Heart right ventricle (tissue), 16 donors: ENCODE measurements at regions of chr3 and their contacts with region 1.

Region 1: GRCh38 chr3:180912304-180913296 is at the start of gene FXR1:
- DNase-seq: peak; percentile 89
- ATAC-seq: peak; percentile 97 to 99 (median 99)
- H3K4me3 ChIP-seq: peak within 1 kb of the TSS; percentile 54 to 100 (median 90)
- H3K27ac ChIP-seq: peak within 1 kb of the TSS; percentile 83 to 97 (median 91)
- H3K4me1 ChIP-seq: peaks cover 0 to 40% (median 34%) of the 10 kb centered on the region in 9 donors
- H3K27me3 ChIP-seq: no peaks in the 10 kb centered on the region
- CTCF ChIP-seq: peak; percentile 60 to 93 (median 82)
- total RNA-seq, gene FXR1: 196 to 314 (median 274) TPM

Region 2: GRCh38 chr3:180802837-180803236 is 109.8 kb before region 1 on chr3:
- intact Hi-C with region 1: loop called in 1 of 10 experiments (anchors 2 kb)
- DNase-seq: no peak
- ATAC-seq: no peak
- H3K4me3 ChIP-seq: no peak overlapping the region
- H3K27ac ChIP-seq: no peak overlapping the region
- H3K4me1 ChIP-seq: peaks cover 0 to 13% (median 0%) of the 10 kb centered on the region in 9 donors
- H3K27me3 ChIP-seq: no peaks in the 10 kb centered on the region
- CTCF ChIP-seq: peak in 7 of 9 donors; percentile 49 to 71 (median 63)

Region 3: GRCh38 chr3:180870008-180870699 is 42.4 kb before region 1 on chr3:
- intact Hi-C with region 1: loop called in 1 of 10 experiments (anchors 5 kb)
- DNase-seq: peak; percentile 11 to 40
- ATAC-seq: peak in 7 of 8 donors; percentile 57 to 75 (median 69)
- H3K4me3 ChIP-seq: peak overlapping the region; percentile 15 to 57 (median 48)
- H3K27ac ChIP-seq: peak overlapping the region in 6 of 10 donors; percentile 6 to 64 (median 48)
- H3K4me1 ChIP-seq: peaks cover 0 to 27% (median 16%) of the 10 kb centered on the region in 9 donors
- H3K27me3 ChIP-seq: peaks cover 0 to 8% (median 0%) of the 10 kb centered on the region in 7 donors
- CTCF ChIP-seq: peak in 1 of 9 donors; percentile 13

Region 4: GRCh38 chr3:180947761-180948633 is 35.4 kb after region 1 on chr3:
- intact Hi-C with region 1: loop called in 1 of 10 experiments (anchors 2 kb)
- DNase-seq: no peak
- ATAC-seq: no peak
- H3K4me3 ChIP-seq: no peak overlapping the region
- H3K27ac ChIP-seq: no peak overlapping the region
- H3K4me1 ChIP-seq: no peaks in the 10 kb centered on the region
- H3K27me3 ChIP-seq: no peaks in the 10 kb centered on the region
- CTCF ChIP-seq: no peak

Region 5: GRCh38 chr3:180959691-180960090 is 47.1 kb after region 1 on chr3:
- intact Hi-C with region 1: no loop called
- DNase-seq: no peak
- ATAC-seq: no peak
- H3K4me3 ChIP-seq: no peak overlapping the region
- H3K27ac ChIP-seq: no peak overlapping the region
- H3K4me1 ChIP-seq: peaks cover 0 to 7% (median 0%) of the 10 kb centered on the region in 9 donors
- H3K27me3 ChIP-seq: no peaks in the 10 kb centered on the region
- CTCF ChIP-seq: no peak

Region 6: GRCh38 chr3:180973543-180973942 is 60.9 kb after region 1 on chr3:
- intact Hi-C with region 1: loop called in 1 of 10 experiments (anchors 5 kb)
- DNase-seq: no peak
- ATAC-seq: no peak
- H3K4me3 ChIP-seq: no peak overlapping the region
- H3K27ac ChIP-seq: no peak overlapping the region
- H3K4me1 ChIP-seq: peaks cover 0 to 14% (median 0%) of the 10 kb centered on the region in 9 donors
- H3K27me3 ChIP-seq: no peaks in the 10 kb centered on the region
- CTCF ChIP-seq: no peak

Region 7: DNA sequence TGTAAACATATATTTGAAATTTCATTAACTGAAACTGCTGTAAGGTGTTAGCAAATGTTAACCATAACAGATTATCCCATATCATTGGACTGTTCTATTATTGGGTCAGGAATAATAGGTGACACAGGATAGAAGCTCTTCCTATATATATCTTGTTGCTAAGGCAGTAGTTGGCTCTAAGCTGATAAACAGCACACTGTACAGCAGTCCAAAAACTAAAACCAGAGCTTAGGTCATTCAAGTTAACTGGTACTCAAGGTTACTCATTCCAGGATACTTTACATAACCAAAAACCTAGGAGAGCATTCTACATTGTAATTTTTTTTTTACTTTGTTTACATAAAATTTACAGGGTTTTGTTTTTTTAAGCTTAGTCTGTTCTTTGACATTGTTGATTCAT is 68.0 kb after region 1 on chr3:
- intact Hi-C with region 1: loop called in 2 of 10 experiments (anchors 5 kb)
- DNase-seq: no peak
- ATAC-seq: peak; percentile 84 to 99 (median 96)
- H3K4me3 ChIP-seq: no peak overlapping the region
- H3K27ac ChIP-seq: peak overlapping the region in 8 of 10 donors; percentile 20 to 80 (median 72)
- H3K4me1 ChIP-seq: peaks cover 0 to 40% (median 8%) of the 10 kb centered on the region in 9 donors
- H3K27me3 ChIP-seq: no peaks in the 10 kb centered on the region
- CTCF ChIP-seq: no peak

Region 8: GRCh38 chr3:180989291-180990163 is 76.9 kb after region 1 on chr3 and contains the start of gene DNAJC19:
- intact Hi-C with region 1: loop called in 3 of 10 experiments (anchors 2 to 5 kb)
- DNase-seq: peak; percentile 85 to 94
- ATAC-seq: peak; percentile 98 to 100 (median 99)
- H3K4me3 ChIP-seq: peak within 1 kb of the TSS; percentile 59 to 88 (median 79)
- H3K27ac ChIP-seq: peak within 1 kb of the TSS; percentile 79 to 91 (median 86)
- H3K4me1 ChIP-seq: peaks cover 0 to 33% (median 18%) of the 10 kb centered on the region in 9 donors
- H3K27me3 ChIP-seq: no peaks in the 10 kb centered on the region
- CTCF ChIP-seq: no peak
- total RNA-seq, gene DNAJC19: 64.9 to 132 (median 97.6) TPM